ENCODE measurements at regions of chr14 and their contacts with region 1.

Region 1: GRCh38 chr14:98218218-98218617 is 1053.8 kb downstream of the BCL11B start:
- DNase-seq: no peak
- H3K4me3 Mint-ChIP-seq: no peak overlapping the region
- H3K27ac Mint-ChIP-seq: no peak overlapping the region
- H3K4me1 Mint-ChIP-seq: peaks cover 32% of the 10 kb centered on the region
- H3K27me3 Mint-ChIP-seq: no peaks in the 10 kb centered on the region

Region 2: DNA sequence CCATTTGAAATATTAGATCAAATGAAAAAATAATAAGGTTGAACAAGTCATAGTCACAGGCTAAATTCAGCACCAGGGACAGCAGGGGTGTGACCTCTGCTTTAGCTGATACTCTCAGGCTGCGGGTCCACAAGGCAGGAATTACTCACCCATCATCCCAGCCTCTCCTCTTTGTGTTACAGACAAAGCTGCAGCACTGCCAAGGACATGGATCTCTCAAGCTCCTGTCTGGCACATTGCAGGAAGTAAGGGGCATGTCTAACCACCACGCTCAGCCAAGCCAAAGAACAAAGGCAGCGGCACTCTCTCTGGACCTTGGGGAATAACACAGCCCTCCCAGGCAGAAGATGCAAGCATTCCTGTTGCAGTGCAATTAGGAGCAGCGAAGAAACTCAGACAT is 637.2 kb before region 1 on chr14:
- CTCF ChIA-PET with region 1: no interaction called
- POLR2A ChIA-PET with region 1: no interaction called
- intact Hi-C with region 1: no loop called
- DNase-seq: no peak
- H3K4me3 Mint-ChIP-seq: no peak overlapping the region
- H3K27ac Mint-ChIP-seq: no peak overlapping the region
- H3K4me1 Mint-ChIP-seq: peaks cover 3% of the 10 kb centered on the region
- H3K27me3 Mint-ChIP-seq: no peaks in the 10 kb centered on the region

Region 3: GRCh38 chr14:98177551-98177950 is 40.7 kb before region 1 on chr14:
- CTCF ChIA-PET with region 1: no interaction called
- POLR2A ChIA-PET with region 1: no interaction called
- intact Hi-C with region 1: no loop called
- DNase-seq: peak; percentile 91
- H3K4me3 Mint-ChIP-seq: peak overlapping the region; percentile 43
- H3K27ac Mint-ChIP-seq: peak overlapping the region; percentile 98
- H3K4me1 Mint-ChIP-seq: peaks cover 95% of the 10 kb centered on the region
- H3K27me3 Mint-ChIP-seq: no peaks in the 10 kb centered on the region

Region 4: DNA sequence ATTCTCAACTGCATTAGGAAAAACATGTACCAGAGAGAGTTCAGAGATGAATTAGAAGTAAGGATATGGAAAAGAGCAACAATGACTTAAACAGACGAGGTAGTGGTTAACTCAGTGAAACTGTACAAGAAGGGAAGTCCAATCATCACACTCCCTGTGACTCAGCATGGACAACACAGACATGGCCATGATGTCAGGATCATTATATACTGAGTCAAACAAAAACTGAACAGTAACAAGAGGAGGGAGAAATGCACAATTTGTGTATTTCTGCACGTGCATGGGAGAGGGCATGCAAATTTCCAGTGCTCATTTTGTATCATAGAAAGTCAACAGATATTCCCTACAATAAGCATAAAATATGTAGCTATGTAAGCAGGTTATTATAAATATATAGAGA is 16.0 kb after region 1 on chr14:
- CTCF ChIA-PET with region 1: no interaction called
- POLR2A ChIA-PET with region 1: no interaction called
- intact Hi-C with region 1: loop called (anchors 2 kb)
- DNase-seq: peak; percentile 72
- H3K4me3 Mint-ChIP-seq: no peak overlapping the region
- H3K27ac Mint-ChIP-seq: peak overlapping the region; percentile 36
- H3K4me1 Mint-ChIP-seq: peaks cover 71% of the 10 kb centered on the region
- H3K27me3 Mint-ChIP-seq: no peaks in the 10 kb centered on the region

Region 5: DNA sequence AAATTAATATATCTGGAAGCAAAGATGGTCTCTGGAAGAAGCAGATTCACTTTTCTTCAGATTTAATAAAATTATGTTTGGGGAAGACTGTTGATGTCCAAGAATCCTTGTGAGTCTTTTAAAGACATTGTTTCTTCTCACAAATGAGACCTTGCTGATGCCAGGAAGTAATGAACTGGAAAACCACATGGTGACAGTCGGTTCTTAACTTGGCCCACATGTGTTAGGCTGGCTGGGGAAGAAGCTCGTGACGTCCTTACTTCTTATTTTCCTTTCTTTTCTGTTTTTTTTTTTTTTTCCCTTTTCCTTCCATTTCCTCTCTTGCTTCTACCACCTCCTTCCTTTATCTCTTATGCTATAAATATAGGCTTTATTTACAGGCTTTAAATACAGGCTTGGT is 103.6 kb after region 1 on chr14:
- CTCF ChIA-PET with region 1: no interaction called
- POLR2A ChIA-PET with region 1: no interaction called
- intact Hi-C with region 1: no loop called
- DNase-seq: no peak
- H3K4me3 Mint-ChIP-seq: no peak overlapping the region
- H3K27ac Mint-ChIP-seq: no peak overlapping the region
- H3K4me1 Mint-ChIP-seq: peaks cover 6% of the 10 kb centered on the region
- H3K27me3 Mint-ChIP-seq: no peaks in the 10 kb centered on the region

Region 6: DNA sequence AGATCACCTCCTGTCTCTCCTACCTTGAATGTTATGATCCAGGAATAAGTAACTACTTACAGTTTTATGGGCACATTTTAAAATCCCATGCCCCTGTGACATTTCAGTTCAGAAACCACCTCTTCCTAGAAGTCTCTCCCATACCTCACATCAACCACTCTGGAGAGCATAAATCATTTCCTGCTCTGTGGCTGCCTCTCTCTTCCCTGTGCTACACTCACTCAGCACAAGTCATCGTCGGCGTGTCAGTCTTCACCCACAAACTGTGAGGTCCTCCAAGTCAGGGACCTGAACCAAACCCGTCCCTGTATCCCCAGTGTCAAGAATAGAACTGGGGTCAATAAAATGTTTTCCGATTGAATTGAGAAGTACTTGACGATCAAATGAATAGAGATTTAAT is 190.5 kb after region 1 on chr14:
- CTCF ChIA-PET with region 1: no interaction called
- POLR2A ChIA-PET with region 1: no interaction called
- intact Hi-C with region 1: no loop called
- DNase-seq: peak; percentile 23
- H3K4me3 Mint-ChIP-seq: no peak overlapping the region
- H3K27ac Mint-ChIP-seq: no peak overlapping the region
- H3K4me1 Mint-ChIP-seq: peaks cover 14% of the 10 kb centered on the region
- H3K27me3 Mint-ChIP-seq: no peaks in the 10 kb centered on the region